SK-N-SH (cell line): ENCODE measurements at regions of chr1 and their contacts with region 1.

Region 1: DNA sequence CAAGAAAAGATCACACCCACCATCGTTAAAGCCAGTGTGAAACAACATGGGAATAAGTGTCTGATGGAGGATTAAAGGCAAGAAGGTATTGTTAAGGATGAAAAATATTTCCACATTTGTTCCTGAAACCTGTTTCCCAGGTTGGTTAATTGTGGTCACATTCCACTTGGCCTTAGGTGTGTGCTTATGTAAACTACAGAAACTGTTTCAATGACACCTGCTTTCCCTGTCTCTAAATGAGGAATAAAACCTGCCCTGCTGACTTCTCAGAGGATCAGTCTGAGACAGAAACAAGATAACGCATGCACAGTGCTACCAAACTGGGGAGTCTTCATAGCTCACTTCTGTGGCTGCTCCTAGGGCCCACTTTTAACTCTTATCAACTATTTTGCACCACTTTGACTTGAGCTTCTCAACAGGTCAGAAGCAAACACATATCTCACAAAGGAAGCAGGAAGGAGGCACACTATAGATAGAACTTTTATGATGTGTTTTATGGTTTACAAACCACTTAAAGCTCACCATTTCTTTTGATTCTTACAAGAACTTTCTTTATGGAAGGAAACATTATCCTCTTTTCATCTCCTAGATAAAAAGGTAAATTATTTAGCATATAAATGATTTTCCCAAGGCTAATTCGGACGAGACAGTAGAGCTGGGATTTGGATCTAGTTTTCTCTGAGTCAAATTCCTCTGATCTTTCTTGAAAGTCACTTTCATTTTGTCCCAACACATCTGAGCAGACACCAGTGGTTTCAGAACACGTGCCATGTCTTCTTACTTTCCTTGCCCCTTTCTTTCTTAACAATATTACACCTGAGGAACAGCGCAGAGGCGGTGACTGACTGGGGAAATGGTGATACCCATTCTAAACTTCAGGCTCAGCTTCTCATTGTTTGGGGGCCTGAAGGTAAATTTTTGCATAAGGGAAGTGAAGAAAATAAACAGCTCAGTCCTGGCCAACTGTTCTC is 33.4 kb downstream of the CYP2J2 start:
- DNase-seq: no peak
- H3K4me3 ChIP-seq: no peak overlapping the region
- H3K27ac ChIP-seq: no peak overlapping the region
- H3K4me1 ChIP-seq: no peaks in the 10 kb centered on the region
- H3K27me3 ChIP-seq: no peaks in the 10 kb centered on the region
- CTCF ChIP-seq: no peak
- EP300 ChIP-seq: no peak
- RAD21 ChIP-seq: no peak

Region 2: GRCh38 chr1:59903141-59903754 is 10.1 kb after region 1 on chr1:
- CTCF ChIA-PET with region 1: interaction called, 11 read pairs
- POLR2A ChIA-PET with region 1: no interaction called
- DNase-seq: peak; percentile 61
- H3K4me3 ChIP-seq: no peak overlapping the region
- H3K27ac ChIP-seq: no peak overlapping the region
- H3K4me1 ChIP-seq: no peaks in the 10 kb centered on the region
- H3K27me3 ChIP-seq: no peaks in the 10 kb centered on the region
- CTCF ChIP-seq: peak; percentile 61
- EP300 ChIP-seq: no peak
- RAD21 ChIP-seq: peak; percentile 70

Region 3: GRCh38 chr1:59926381-59927123 is 33.4 kb after region 1 on chr1 and contains the start of gene CYP2J2:
- CTCF ChIA-PET with region 1: no interaction called
- POLR2A ChIA-PET with region 1: no interaction called
- DNase-seq: peak; percentile 82
- H3K4me3 ChIP-seq: peak within 1 kb of the TSS; percentile 66 to 75
- H3K27ac ChIP-seq: peak within 1 kb of the TSS in 1 of 2 experiments; percentile 56; a peak in 1 of 4 replicates
- H3K4me1 ChIP-seq: peaks cover 0 to 2% of the 10 kb centered on the region in 2 experiments; a peak in 1 of 4 replicates
- H3K27me3 ChIP-seq: 0 out of 2 replicates have a peak, but pooled peaks cover 6% of the 10 kb centered on the region
- CTCF ChIP-seq: no peak
- EP300 ChIP-seq: no peak
- RAD21 ChIP-seq: no peak
- polyA plus RNA-seq, gene CYP2J2: 1.1 and 1.2 TPM in 2 replicates